Upper lobe of right lung (tissue), 1 donor: ENCODE measurements at regions of chr7 and their contacts with region 1.

Region 1: DNA sequence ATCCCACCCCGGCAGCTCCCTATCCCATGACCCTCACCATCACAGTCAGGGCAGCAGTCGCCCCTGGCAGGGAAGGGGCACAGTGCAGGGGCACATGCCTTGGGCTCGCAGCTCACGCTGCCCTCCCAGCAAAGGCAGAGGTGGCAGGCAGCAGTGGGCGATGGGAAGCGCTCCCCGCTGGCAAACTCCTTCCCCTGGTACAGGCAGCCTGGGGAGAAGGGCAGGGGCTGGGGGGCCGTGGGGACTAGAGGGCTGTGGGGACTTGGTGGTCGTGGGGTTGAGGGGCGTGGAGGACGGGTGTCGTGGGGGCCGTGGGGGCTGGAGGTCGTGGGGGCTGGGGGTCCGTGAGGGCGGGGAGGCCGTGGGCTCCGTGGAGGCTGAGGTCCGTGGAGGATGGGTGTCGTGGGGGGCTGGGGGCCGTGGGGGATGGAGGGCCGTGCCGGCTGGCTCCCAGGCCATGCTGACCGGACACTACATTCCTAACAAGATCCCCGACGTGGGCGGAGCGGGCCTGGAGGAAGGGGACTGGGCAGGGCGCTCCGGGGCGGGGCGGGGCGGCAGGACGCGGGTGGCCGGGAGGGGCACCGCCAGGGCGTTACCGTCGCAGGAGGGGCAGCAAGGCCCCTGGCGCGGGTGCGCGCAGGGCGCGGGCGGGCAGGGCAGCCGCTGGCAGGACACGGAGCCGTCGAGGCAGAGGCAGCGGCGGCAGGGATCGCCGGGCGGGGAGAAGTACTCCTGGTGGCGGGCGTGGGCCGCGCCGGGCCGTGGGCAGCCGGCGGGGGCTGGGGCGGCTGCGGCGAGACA is 20.0 kb downstream of the KCP start:
- DNase-seq: peak; percentile 75
- ATAC-seq: peak; percentile 45
- H3K4me3 ChIP-seq: peak overlapping the region; percentile 36
- H3K27ac ChIP-seq: no peak overlapping the region
- H3K4me1 ChIP-seq: no peaks in the 10 kb centered on the region
- H3K27me3 ChIP-seq: peaks cover 14% of the 10 kb centered on the region
- CTCF ChIP-seq: no peak

Region 2: GRCh38 chr7:128681794-128682537 is 208.5 kb before region 1 on chr7:
- intact Hi-C with region 1: no loop called
- DNase-seq: no peak
- ATAC-seq: no peak
- H3K4me3 ChIP-seq: no peak overlapping the region
- H3K27ac ChIP-seq: no peak overlapping the region
- H3K4me1 ChIP-seq: no peaks in the 10 kb centered on the region
- H3K27me3 ChIP-seq: no peaks in the 10 kb centered on the region
- CTCF ChIP-seq: no peak

Region 3: DNA sequence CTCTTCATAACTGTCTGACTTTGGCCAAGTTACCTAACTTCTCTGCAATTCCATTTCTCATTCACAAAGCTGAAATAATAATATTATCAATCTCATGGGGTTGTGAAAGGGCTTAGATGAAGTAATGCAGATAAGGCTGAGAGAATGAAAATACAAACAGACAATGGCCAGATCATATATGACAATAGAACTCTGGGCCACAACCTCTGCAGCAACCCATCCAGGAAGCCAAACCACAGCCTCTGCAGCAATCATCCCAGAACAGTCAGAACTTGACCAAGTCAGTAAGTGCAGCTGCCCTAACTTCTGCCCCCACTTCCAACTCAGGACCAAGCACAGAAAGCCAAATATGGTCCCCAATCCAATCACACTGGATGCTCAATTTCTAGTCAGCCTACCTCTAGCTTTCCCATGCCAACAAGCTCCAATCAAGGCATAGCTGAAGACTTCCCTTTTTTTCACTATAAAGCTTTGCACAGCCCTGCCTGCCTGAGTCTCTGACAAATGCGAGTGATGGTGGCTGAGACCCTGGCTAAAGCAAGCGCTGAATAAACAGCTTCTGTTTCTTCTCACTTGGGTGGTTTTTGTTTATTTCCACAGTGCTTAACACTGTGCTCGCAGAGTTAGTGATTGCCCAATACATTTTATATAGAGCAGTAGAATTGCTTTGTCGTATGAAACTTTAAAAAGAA is 199.2 kb after region 1 on chr7:
- intact Hi-C with region 1: loop called (anchors 10 kb)
- DNase-seq: no peak
- ATAC-seq: peak; percentile 32
- H3K4me3 ChIP-seq: no peak overlapping the region
- H3K27ac ChIP-seq: no peak overlapping the region
- H3K4me1 ChIP-seq: no peaks in the 10 kb centered on the region
- H3K27me3 ChIP-seq: peaks cover 9% of the 10 kb centered on the region
- CTCF ChIP-seq: no peak